PC-9 (cell line): ENCODE measurements at regions of chr2 and their contacts with region 1.

Region 1: DNA sequence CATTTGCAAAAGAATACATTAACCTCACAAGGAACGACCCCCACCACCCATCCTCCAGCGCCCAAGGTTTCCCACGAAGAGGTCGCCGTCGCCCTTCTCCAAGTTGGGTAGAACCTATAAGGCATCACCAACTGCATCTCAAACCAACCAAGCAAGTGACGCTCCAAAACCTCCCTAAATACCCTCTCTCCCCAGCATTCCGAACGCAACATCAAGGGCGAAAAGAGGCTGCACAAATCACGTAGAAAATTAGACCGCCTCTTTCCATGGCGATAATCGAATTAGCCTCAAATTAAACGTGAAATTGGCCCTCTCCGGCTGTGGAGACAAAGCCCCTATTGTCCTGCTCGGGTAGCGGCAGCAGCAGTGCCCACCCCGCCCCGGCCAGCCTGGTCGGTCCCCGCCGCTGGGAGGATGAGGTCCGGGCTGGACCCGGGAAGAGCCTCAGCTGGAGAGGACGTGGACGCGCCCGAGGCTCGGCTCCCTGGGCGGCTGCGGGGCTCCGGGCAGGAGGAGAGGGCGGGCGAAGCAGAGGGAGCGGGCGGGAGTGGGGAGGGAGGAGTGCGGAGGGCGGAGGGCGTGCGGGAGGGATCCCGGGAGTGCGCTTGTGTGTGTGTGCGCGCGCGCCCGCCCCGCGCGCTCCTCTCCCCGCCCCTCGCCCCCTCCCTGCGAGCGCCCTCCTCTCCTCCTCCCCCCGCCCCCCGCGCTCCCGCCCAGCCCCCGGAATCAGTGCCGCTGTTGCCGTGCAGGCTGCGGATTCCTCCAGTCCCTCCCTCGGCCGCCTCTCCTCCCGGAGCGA is at the start of gene SPTBN1:
- DNase-seq: peak; percentile 45 to 86
- H3K4me3 ChIP-seq: peak within 1 kb of the TSS; percentile 68
- H3K27ac ChIP-seq: no peak within 1 kb of the TSS
- H3K4me1 ChIP-seq: peaks cover 28% of the 10 kb centered on the region
- H3K27me3 ChIP-seq: no peaks in the 10 kb centered on the region; the same call in 1 of the 2 replicates
- CTCF ChIP-seq: no peak
- total RNA-seq, gene SPTBN1: 234 and 262 TPM in 2 replicates

Region 2: DNA sequence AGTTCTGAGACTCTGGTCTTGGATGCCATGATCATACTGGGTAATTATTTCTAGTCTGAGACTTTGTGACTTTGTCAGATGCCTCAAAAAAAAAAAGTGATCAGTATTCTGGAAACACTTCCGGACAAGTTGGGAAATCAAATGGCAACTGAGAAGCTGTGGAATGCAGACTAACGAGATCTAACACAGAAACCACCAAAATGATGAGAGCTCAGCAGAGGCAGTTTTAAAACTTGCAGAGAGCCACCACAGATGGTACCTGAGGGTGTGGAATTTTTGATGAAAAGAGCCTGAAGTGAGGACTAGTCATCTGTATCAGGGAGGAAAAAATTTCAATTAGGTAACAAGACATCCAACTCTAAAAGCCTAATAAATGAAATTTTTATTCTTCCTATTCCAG is 590.5 kb before region 1 on chr2:
- CTCF ChIA-PET with region 1: no interaction called
- POLR2A ChIA-PET with region 1: interaction called, 22 read pairs
- intact Hi-C with region 1: no loop called
- DNase-seq: peak; percentile 26 to 80
- H3K4me3 ChIP-seq: no peak overlapping the region
- H3K27ac ChIP-seq: peak overlapping the region; percentile 35
- H3K4me1 ChIP-seq: peaks cover 21% of the 10 kb centered on the region
- H3K27me3 ChIP-seq: no peaks in the 10 kb centered on the region
- CTCF ChIP-seq: no peak

Region 3: DNA sequence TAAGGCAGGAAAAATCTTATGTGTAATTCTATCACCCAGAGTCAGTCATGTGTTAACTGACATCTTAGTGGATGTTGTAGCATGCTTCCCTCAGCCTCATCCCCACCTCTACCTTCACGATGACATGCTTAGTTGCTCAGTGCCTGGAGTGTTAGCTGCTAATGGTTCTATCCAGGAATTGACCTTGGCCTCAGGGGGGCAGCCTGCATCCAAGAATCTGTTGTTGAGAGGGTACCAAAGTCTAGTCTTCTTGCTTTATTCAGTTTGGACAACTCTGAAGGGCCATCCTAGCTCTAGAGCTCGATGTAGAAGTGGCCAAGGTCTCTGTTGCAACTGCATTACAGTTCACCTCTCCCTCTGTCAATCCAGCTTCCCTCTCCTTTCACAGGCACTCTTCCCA is 279.2 kb before region 1 on chr2:
- CTCF ChIA-PET with region 1: no interaction called
- POLR2A ChIA-PET with region 1: no interaction called
- intact Hi-C with region 1: loop called (anchors 2 kb)
- DNase-seq: peak in 1 of 2 experiments; percentile 40
- H3K4me3 ChIP-seq: no peak overlapping the region
- H3K27ac ChIP-seq: no peak overlapping the region
- H3K4me1 ChIP-seq: no peaks in the 10 kb centered on the region
- H3K27me3 ChIP-seq: no peaks in the 10 kb centered on the region
- CTCF ChIP-seq: peak; percentile 46

Region 4: DNA sequence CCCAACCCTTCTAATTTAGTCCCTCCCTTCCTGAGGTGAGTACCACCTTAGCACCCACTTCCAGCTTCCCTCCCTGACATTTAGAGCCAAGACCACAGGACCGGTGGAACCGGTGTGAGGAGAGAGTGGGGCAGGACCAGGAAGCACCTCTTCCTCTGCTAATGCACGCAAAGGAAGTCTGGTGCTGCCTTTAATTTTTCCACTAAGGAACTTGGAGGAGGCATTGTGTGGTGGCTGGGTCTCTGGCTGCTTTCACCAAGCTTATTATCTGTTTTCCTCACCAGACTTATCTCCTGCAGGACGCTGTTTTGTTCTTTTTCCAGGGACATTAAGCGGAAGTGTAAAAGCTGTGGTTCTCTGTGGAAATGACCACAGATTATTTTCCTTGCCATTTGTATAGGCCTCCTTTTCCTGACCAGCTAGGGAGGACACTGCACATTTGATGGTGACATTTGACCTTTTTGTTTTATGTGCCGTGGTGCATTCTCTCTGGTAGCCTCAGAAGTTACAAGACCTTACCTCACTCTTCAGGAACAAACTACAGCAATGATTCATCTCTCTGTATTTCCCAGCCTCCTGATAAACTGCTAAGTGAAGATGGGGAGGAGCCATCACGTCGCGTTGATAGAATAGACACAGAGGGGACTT is 39.5 kb before region 1 on chr2:
- CTCF ChIA-PET with region 1: interaction called, 5 read pairs
- POLR2A ChIA-PET with region 1: no interaction called
- intact Hi-C with region 1: loop called (anchors 5 kb)
- DNase-seq: peak; percentile 58 to 80
- H3K4me3 ChIP-seq: no peak overlapping the region
- H3K27ac ChIP-seq: 0 out of 2 replicates have a peak overlapping the region, but pooled peaks have one; percentile 19
- H3K4me1 ChIP-seq: peaks cover 24% of the 10 kb centered on the region
- H3K27me3 ChIP-seq: no peaks in the 10 kb centered on the region
- CTCF ChIP-seq: no peak

Region 5: GRCh38 chr2:54545702-54546450 is 90.1 kb after region 1 on chr2:
- CTCF ChIA-PET with region 1: no interaction called
- POLR2A ChIA-PET with region 1: interaction called, 19 read pairs
- intact Hi-C with region 1: no loop called
- DNase-seq: peak; percentile 40 to 98
- H3K4me3 ChIP-seq: no peak overlapping the region
- H3K27ac ChIP-seq: peak overlapping the region; percentile 92
- H3K4me1 ChIP-seq: peaks cover 41% of the 10 kb centered on the region
- H3K27me3 ChIP-seq: no peaks in the 10 kb centered on the region
- CTCF ChIP-seq: no peak

Region 6: DNA sequence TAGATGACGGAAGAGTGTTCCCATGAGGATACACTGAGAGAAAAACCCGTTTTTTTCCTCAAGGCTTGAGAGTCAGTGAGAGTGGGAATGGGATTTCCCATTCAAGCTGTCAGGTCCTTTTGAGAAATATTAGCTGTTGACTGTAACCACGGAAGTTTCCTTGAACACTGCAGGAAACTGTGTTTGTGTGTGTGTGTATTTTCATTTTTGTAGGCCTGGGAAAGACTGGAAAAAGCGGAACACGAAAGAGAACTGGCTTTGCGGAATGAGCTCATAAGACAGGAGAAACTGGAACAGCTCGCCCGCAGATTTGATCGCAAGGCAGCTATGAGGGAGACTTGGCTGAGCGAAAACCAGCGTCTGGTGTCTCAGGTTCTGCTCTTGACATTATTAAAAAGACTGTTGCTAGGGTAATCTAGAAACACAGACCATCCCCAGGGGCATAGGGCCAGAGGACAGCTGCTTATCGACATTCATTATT is 168.9 kb after region 1 on chr2:
- CTCF ChIA-PET with region 1: no interaction called
- POLR2A ChIA-PET with region 1: no interaction called
- intact Hi-C with region 1: no loop called
- DNase-seq: no peak
- H3K4me3 ChIP-seq: no peak overlapping the region
- H3K27ac ChIP-seq: no peak overlapping the region
- H3K4me1 ChIP-seq: no peaks in the 10 kb centered on the region
- H3K27me3 ChIP-seq: no peaks in the 10 kb centered on the region
- CTCF ChIP-seq: no peak